Naive thymus-derived CD8-positive, alpha-beta T cell (primary cell): ENCODE measurements at regions of chr5 and their contacts with region 1.

Region 1: GRCh38 chr5:146203011-146203871 is at the start of gene RBM27:
- DNase-seq: peak; percentile 87 to 100 (median 97)
- ATAC-seq: peak; percentile 99
- H3K4me3 Mint-ChIP-seq: no peak within 1 kb of the TSS
- H3K27ac Mint-ChIP-seq: no peak within 1 kb of the TSS
- H3K4me1 Mint-ChIP-seq: peaks cover 0 to 20% (median 10%) of the 10 kb centered on the region in 4 donors
- H3K27me3 Mint-ChIP-seq: no peaks in the 10 kb centered on the region
- polyA plus RNA-seq, gene RBM27: 5.7 to 7.5 (median 6.6) TPM

Region 2: GRCh38 chr5:146188358-146188757 is 14.9 kb before region 1 on chr5:
- POLR2A ChIA-PET with region 1: interaction called, 12 read pairs
- DNase-seq: no peak
- ATAC-seq: no peak
- H3K4me3 Mint-ChIP-seq: no peak overlapping the region
- H3K27ac Mint-ChIP-seq: no peak overlapping the region
- H3K4me1 Mint-ChIP-seq: no peaks in the 10 kb centered on the region
- H3K27me3 Mint-ChIP-seq: peaks cover 8 to 23% (median 12%) of the 10 kb centered on the region in 5 donors